ENCODE measurements at regions of chr6 and their contacts with region 1.

Region 1: GRCh38 chr6:2245094-2245876 is at the start of gene GMDS:
- DNase-seq: peak; percentile 67 to 86 (median 79)
- ATAC-seq: peak; percentile 98
- H3K4me3 ChIP-seq: peak within 1 kb of the TSS; percentile 90
- H3K4me3 Mint-ChIP-seq: peak within 1 kb of the TSS; percentile 86 to 97 (median 93)
- H3K27ac ChIP-seq: peak within 1 kb of the TSS; percentile 96
- H3K27ac Mint-ChIP-seq: peak within 1 kb of the TSS; percentile 84 to 98 (median 95)
- H3K4me1 ChIP-seq: peaks cover 15 to 18% of the 10 kb centered on the region in 2 donors
- H3K4me1 Mint-ChIP-seq: peaks cover 41 to 77% (median 61%) of the 10 kb centered on the region in 7 donors
- H3K27me3 ChIP-seq: no peaks in the 10 kb centered on the region
- H3K27me3 Mint-ChIP-seq: no peaks in the 10 kb centered on the region
- total RNA-seq, gene GMDS: 12.7 to 33.9 (median 18.3) TPM

Region 2: GRCh38 chr6:692855-693722 is 1552.2 kb before region 1 on chr6 and contains the start of gene EXOC2:
- CTCF ChIA-PET with region 1: no interaction called
- POLR2A ChIA-PET with region 1: no interaction called
- intact Hi-C with region 1: loop called in 1 of 2 experiments (anchors 5 kb)
- DNase-seq: peak; percentile 70 to 88 (median 81)
- ATAC-seq: peak; percentile 93
- H3K4me3 ChIP-seq: peak within 1 kb of the TSS; percentile 87
- H3K4me3 Mint-ChIP-seq: peak within 1 kb of the TSS; percentile 92 to 96 (median 95)
- H3K27ac ChIP-seq: peak within 1 kb of the TSS; percentile 83
- H3K27ac Mint-ChIP-seq: peak within 1 kb of the TSS; percentile 84 to 92 (median 91)
- H3K4me1 ChIP-seq: peaks cover 14 to 20% of the 10 kb centered on the region in 2 donors
- H3K4me1 Mint-ChIP-seq: peaks cover 23 to 45% (median 29%) of the 10 kb centered on the region in 7 donors
- H3K27me3 ChIP-seq: no peaks in the 10 kb centered on the region
- H3K27me3 Mint-ChIP-seq: no peaks in the 10 kb centered on the region
- total RNA-seq, gene EXOC2: 26.7 to 40.6 (median 38.8) TPM

Region 3: DNA sequence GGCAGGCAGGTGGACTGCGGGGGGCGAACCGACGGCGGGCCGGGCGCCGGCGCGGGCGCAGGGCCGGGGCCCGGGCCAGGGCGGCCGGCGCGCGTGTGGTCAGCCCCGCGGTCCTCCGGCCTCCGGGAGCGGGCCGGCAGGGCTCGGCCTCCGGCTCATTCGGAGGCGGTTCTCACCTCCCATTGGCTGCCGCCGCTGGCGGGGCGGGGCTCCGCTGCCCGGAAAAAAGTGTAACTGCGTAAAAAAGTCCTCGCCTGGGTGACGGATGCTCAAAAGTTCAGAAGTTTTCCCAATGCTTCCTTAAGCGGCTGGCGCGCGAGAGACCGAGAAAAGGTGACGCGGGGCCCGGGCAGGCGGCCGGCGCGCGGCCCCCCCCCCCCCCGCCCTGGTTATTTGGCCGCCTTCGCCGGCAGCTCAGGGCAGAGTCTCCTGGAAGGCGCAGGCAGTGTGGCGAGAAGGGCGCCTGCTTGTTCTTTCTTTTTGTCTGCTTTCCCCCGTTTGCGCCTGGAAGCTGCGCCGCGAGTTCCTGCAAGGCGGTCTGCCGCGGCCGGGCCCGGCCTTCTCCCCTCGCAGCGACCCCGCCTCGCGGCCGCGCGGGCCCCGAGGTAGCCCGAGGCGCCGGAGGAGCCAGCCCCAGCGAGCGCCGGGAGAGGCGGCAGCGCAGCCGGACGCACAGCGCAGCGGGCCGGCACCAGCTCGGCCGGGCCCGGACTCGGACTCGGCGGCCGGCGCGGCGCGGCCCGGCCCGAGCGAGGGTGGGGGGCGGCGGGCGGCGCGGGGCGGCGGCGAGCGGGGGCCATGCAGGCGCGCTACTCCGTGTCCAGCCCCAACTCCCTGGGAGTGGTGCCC is 635.4 kb before region 1 on chr6 and contains the start of gene FOXC1:
- CTCF ChIA-PET with region 1: no interaction called
- POLR2A ChIA-PET with region 1: no interaction called
- intact Hi-C with region 1: loop called in 1 of 2 experiments (anchors 5 kb)
- DNase-seq: peak in 1 of 9 donors; percentile 61
- ATAC-seq: peak; percentile 54
- H3K4me3 ChIP-seq: peak within 1 kb of the TSS; percentile 26
- H3K4me3 Mint-ChIP-seq: peak within 1 kb of the TSS; percentile 75 to 88 (median 82)
- H3K27ac ChIP-seq: no peak within 1 kb of the TSS
- H3K27ac Mint-ChIP-seq: peak within 1 kb of the TSS in 1 of 9 donors; percentile 84
- H3K4me1 ChIP-seq: peaks cover 22 to 27% of the 10 kb centered on the region in 2 donors
- H3K4me1 Mint-ChIP-seq: peaks cover 35 to 65% (median 55%) of the 10 kb centered on the region in 7 donors
- H3K27me3 ChIP-seq: peaks cover 20 to 36% of the 10 kb centered on the region in 2 donors
- H3K27me3 Mint-ChIP-seq: peaks cover 55 to 67% (median 65%) of the 10 kb centered on the region in 5 donors
- total RNA-seq, gene FOXC1: not detected

Region 4: GRCh38 chr6:2542858-2543218 is 297.6 kb after region 1 on chr6:
- CTCF ChIA-PET with region 1: no interaction called
- POLR2A ChIA-PET with region 1: no interaction called
- intact Hi-C with region 1: loop called in 1 of 2 experiments (anchors 5 kb)
- DNase-seq: peak in 8 of 9 donors; percentile 20 to 64 (median 49)
- ATAC-seq: peak; percentile 87
- H3K4me3 ChIP-seq: peak overlapping the region; percentile 14
- H3K4me3 Mint-ChIP-seq: peak overlapping the region; percentile 18 to 73 (median 53)
- H3K27ac ChIP-seq: no peak overlapping the region
- H3K27ac Mint-ChIP-seq: peak overlapping the region in 3 of 9 donors; percentile 1 to 61 (median 15)
- H3K4me1 ChIP-seq: peaks cover 16 to 20% of the 10 kb centered on the region in 2 donors
- H3K4me1 Mint-ChIP-seq: peaks cover 17 to 35% (median 25%) of the 10 kb centered on the region in 7 donors
- H3K27me3 ChIP-seq: peaks cover 0 to 4% of the 10 kb centered on the region in 2 donors
- H3K27me3 Mint-ChIP-seq: peaks cover 57 to 77% (median 63%) of the 10 kb centered on the region in 5 donors

Region 5: GRCh38 chr6:3118353-3119039 is 873.2 kb after region 1 on chr6 and contains the start of gene BPHL:
- CTCF ChIA-PET with region 1: no interaction called
- POLR2A ChIA-PET with region 1: no interaction called
- intact Hi-C with region 1: loop called in 1 of 2 experiments (anchors 2 kb)
- DNase-seq: peak; percentile 97 to 100 (median 99)
- ATAC-seq: peak; percentile 99
- H3K4me3 ChIP-seq: peak within 1 kb of the TSS; percentile 91
- H3K4me3 Mint-ChIP-seq: peak within 1 kb of the TSS; percentile 77 to 93 (median 90)
- H3K27ac ChIP-seq: peak within 1 kb of the TSS; percentile 97
- H3K27ac Mint-ChIP-seq: peak within 1 kb of the TSS; percentile 82 to 97 (median 95)
- H3K4me1 ChIP-seq: peaks cover 0 to 4% of the 10 kb centered on the region in 2 donors
- H3K4me1 Mint-ChIP-seq: peaks cover 12 to 19% (median 18%) of the 10 kb centered on the region in 7 donors
- H3K27me3 ChIP-seq: no peaks in the 10 kb centered on the region
- H3K27me3 Mint-ChIP-seq: peaks cover 0 to 5% (median 0%) of the 10 kb centered on the region in 5 donors
- total RNA-seq, gene BPHL: 7.9 to 18.0 (median 10.0) TPM

Measured in naive thymus-derived CD4-positive, alpha-beta T cell (primary cell).